ENCODE measurements at regions of chr10 and their contacts with region 1.

Region 1: GRCh38 chr10:43728425-43728824 is 79.7 kb upstream of the ZNF32 start:
- DNase-seq: no peak
- H3K4me3 ChIP-seq: no peak overlapping the region
- CTCF ChIP-seq: no peak

Region 2: DNA sequence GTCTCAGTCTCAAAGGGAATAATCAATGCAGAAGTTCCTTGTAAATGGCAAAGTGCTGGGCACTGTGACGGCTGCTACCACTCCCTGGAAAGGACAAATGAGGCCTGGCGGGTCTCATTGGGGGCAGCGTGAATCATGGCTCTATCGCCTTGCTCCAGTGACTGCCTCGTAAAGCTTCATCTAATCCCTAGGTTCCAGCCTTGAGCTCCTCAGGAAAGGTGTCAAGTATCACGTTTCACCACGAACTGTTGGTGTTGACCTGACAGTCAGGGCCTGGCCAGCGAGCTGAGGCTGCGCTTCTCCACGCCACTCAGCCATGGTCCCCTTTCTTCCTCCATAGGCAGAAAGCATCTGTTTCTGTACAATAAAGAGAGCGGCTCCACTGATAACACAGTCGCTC is 47.0 kb after region 1 on chr10:
- in situ Hi-C with region 1: loop called (anchors 5 kb)
- DNase-seq: no peak
- H3K4me3 ChIP-seq: no peak overlapping the region
- CTCF ChIP-seq: no peak

Measured in astrocyte of the cerebellum (primary cell).